Naive thymus-derived CD4-positive, alpha-beta T cell (primary cell): ENCODE measurements at regions of chr1 and their contacts with region 1.

Region 1: DNA sequence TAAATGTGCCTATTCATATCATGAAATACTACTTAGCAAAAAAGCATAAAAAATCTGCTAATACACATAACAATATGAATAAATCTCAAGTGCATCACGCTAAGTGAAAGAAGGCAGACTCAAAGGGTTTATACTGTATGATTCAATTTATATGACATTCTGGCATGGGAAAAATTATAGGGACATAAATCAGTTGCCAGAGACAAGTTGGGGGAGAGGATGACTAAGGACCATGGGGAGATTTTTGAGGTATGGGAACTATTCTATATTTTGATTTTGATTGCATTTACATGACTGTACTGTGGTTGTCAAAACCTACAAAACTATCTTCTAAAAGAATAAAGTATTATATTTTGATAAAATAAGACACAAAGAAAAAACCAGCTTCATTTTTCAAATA is 650.3 kb upstream of the NR5A2 start:
- DNase-seq: no peak
- ATAC-seq: no peak
- H3K4me3 ChIP-seq: no peak overlapping the region
- H3K4me3 Mint-ChIP-seq: no peak overlapping the region
- H3K27ac ChIP-seq: no peak overlapping the region
- H3K27ac Mint-ChIP-seq: no peak overlapping the region
- H3K4me1 ChIP-seq: no peaks in the 10 kb centered on the region
- H3K4me1 Mint-ChIP-seq: no peaks in the 10 kb centered on the region
- H3K27me3 ChIP-seq: no peaks in the 10 kb centered on the region
- H3K27me3 Mint-ChIP-seq: peaks cover 0 to 15% (median 5%) of the 10 kb centered on the region in 5 donors

Region 2: DNA sequence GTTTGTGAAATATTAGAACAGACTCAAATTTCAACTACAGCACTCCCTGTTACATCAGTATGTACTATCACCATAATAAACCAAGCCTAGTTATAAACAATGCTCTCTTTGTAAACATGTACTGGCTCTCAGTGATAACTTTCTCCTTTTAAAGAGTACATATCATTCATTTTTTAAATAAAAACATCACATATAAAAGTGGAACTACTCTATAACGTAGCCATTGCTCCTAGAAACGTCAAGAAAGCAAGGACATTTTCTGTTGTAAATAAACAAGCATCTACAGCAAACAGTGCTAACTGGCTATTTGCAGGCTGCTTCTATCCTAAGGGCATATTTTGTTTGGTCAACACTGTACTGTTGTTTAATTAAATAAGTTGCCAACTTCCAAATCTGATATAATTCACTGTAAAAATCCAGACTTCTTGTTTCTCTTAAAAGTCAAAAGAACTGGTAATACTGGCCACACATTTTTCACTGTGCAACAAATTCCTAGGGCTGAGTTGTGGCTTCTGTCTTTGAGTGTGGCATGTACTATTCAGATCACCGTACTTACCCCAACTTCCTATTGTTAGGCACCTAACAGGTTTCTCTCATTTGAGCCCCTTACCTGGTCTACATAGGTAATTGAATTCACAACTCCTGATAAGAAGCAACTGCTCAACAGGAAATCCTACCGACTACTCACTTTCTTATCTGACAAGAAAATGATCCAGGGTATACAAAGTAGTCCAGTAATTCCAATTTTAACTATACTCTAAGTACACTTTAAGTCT is 1713.8 kb before region 1 on chr1:
- CTCF ChIA-PET with region 1: no interaction called
- POLR2A ChIA-PET with region 1: no interaction called
- intact Hi-C with region 1: no loop called
- DNase-seq: no peak
- ATAC-seq: no peak
- H3K4me3 ChIP-seq: no peak overlapping the region
- H3K4me3 Mint-ChIP-seq: no peak overlapping the region
- H3K27ac ChIP-seq: no peak overlapping the region
- H3K27ac Mint-ChIP-seq: peak overlapping the region in 4 of 9 donors; percentile 9 to 62 (median 21)
- H3K4me1 ChIP-seq: peaks cover 0 to 6% of the 10 kb centered on the region in 2 donors
- H3K4me1 Mint-ChIP-seq: peaks cover 0 to 25% (median 14%) of the 10 kb centered on the region in 7 donors
- H3K27me3 ChIP-seq: no peaks in the 10 kb centered on the region
- H3K27me3 Mint-ChIP-seq: no peaks in the 10 kb centered on the region

Region 3: GRCh38 chr1:199422198-199422597 is 45.0 kb after region 1 on chr1:
- CTCF ChIA-PET with region 1: no interaction called
- POLR2A ChIA-PET with region 1: no interaction called
- intact Hi-C with region 1: loop called in 1 of 2 experiments (anchors 5 kb)
- DNase-seq: no peak
- ATAC-seq: no peak
- H3K4me3 ChIP-seq: no peak overlapping the region
- H3K4me3 Mint-ChIP-seq: no peak overlapping the region
- H3K27ac ChIP-seq: no peak overlapping the region
- H3K27ac Mint-ChIP-seq: no peak overlapping the region
- H3K4me1 ChIP-seq: no peaks in the 10 kb centered on the region
- H3K4me1 Mint-ChIP-seq: no peaks in the 10 kb centered on the region
- H3K27me3 ChIP-seq: no peaks in the 10 kb centered on the region
- H3K27me3 Mint-ChIP-seq: peaks cover 4 to 44% (median 33%) of the 10 kb centered on the region in 5 donors

Region 4: DNA sequence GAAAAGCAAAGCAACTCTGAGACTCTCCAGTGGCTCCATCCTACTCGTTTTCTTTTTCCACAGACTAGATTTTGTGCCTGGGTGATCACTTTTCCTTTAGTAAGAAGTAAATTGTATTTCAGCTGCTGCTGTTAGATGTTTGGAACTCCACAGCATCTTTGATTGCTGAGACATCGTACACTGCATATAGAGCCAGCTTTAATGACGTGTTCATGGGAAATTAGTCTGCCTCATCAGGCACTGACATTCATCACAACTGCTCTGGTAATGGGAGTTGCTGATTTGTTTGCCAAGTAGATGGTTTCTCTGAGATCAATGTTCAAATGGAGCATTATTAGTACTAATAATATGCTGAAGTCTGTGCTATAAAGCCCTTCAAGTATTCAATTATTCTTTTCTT is 76.5 kb after region 1 on chr1:
- CTCF ChIA-PET with region 1: no interaction called
- POLR2A ChIA-PET with region 1: no interaction called
- intact Hi-C with region 1: no loop called
- DNase-seq: no peak
- ATAC-seq: no peak
- H3K4me3 ChIP-seq: no peak overlapping the region
- H3K4me3 Mint-ChIP-seq: no peak overlapping the region
- H3K27ac ChIP-seq: no peak overlapping the region
- H3K27ac Mint-ChIP-seq: no peak overlapping the region
- H3K4me1 ChIP-seq: no peaks in the 10 kb centered on the region
- H3K4me1 Mint-ChIP-seq: no peaks in the 10 kb centered on the region
- H3K27me3 ChIP-seq: no peaks in the 10 kb centered on the region
- H3K27me3 Mint-ChIP-seq: peaks cover 0 to 11% (median 3%) of the 10 kb centered on the region in 5 donors